GM12878 (cell line): ENCODE measurements at regions of chr6 and their contacts with region 1.

Region 1: GRCh38 chr6:81929828-81930227 is 177.3 kb upstream of the TENT5A start:
- DNase-seq: no peak
- ATAC-seq: no peak
- H3K4me3 ChIP-seq: no peak overlapping the region
- H3K27ac ChIP-seq: no peak overlapping the region
- H3K4me1 ChIP-seq: no peaks in the 10 kb centered on the region
- H3K27me3 ChIP-seq: no peaks in the 10 kb centered on the region
- CTCF ChIP-seq: no peak
- EP300 ChIP-seq: no peak
- POLR2A ChIP-seq: no peak
- RAD21 ChIP-seq: no peak

Region 2: GRCh38 chr6:81900616-81901015 is 29.2 kb before region 1 on chr6:
- CTCF ChIA-PET with region 1: interaction called, 3 read pairs
- POLR2A ChIA-PET with region 1: interaction called, 3 read pairs
- RAD21 ChIA-PET with region 1: interaction called, 6 read pairs
- SMC1A ChIA-PET with region 1: interaction called, 16 read pairs
- in situ Hi-C with region 1: no loop called
- intact Hi-C with region 1: no loop called
- DNase-seq: no peak
- ATAC-seq: peak; percentile 70
- H3K4me3 ChIP-seq: no peak overlapping the region
- H3K27ac ChIP-seq: no peak overlapping the region
- H3K4me1 ChIP-seq: no peaks in the 10 kb centered on the region
- H3K27me3 ChIP-seq: no peaks in the 10 kb centered on the region
- CTCF ChIP-seq: no peak
- EP300 ChIP-seq: no peak
- POLR2A ChIP-seq: no peak
- RAD21 ChIP-seq: no peak

Region 3: DNA sequence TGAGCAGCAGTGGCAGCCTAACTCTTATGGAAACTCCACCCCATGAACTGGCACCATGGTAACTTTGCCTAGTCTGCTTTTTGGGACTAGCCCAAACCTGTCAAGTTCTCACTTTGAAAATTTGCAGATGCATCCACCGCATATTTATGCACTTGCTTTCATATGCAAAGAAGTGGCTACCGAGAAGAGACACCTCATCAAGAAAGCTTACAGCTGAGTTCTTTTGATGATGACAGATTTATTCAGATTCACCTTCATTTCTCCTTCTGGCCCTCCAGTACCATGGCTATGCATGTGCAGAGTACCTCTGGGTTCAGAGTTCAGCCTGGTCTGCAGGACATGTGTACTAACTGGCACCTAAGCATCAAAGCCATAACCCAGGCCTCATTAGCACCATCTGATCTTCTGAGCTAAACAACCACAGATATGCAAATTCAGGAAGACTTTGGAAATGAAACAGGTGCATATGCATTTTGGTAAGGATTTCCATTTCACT is 23.1 kb before region 1 on chr6:
- CTCF ChIA-PET with region 1: interaction called, 6 read pairs
- POLR2A ChIA-PET with region 1: interaction called, 4 read pairs
- RAD21 ChIA-PET with region 1: interaction called, 10 read pairs
- SMC1A ChIA-PET with region 1: interaction called, 22 read pairs
- in situ Hi-C with region 1: no loop called
- intact Hi-C with region 1: no loop called
- DNase-seq: peak; percentile 44
- ATAC-seq: peak; percentile 54
- H3K4me3 ChIP-seq: no peak overlapping the region
- H3K27ac ChIP-seq: no peak overlapping the region
- H3K4me1 ChIP-seq: no peaks in the 10 kb centered on the region
- H3K27me3 ChIP-seq: no peaks in the 10 kb centered on the region
- CTCF ChIP-seq: no peak
- EP300 ChIP-seq: 0 out of 4 replicates have a peak, but pooled peaks of 1 of the 2 experiments have one; percentile 5
- POLR2A ChIP-seq: no peak
- RAD21 ChIP-seq: no peak

Region 4: GRCh38 chr6:81944661-81945060 is 14.8 kb after region 1 on chr6:
- CTCF ChIA-PET with region 1: interaction called, 5 read pairs
- POLR2A ChIA-PET with region 1: interaction called, 4 read pairs
- RAD21 ChIA-PET with region 1: interaction called, 4 read pairs
- SMC1A ChIA-PET with region 1: interaction called, 16 read pairs
- in situ Hi-C with region 1: no loop called
- intact Hi-C with region 1: no loop called
- DNase-seq: no peak
- ATAC-seq: no peak
- H3K4me3 ChIP-seq: no peak overlapping the region
- H3K27ac ChIP-seq: no peak overlapping the region
- H3K4me1 ChIP-seq: no peaks in the 10 kb centered on the region
- H3K27me3 ChIP-seq: no peaks in the 10 kb centered on the region
- CTCF ChIP-seq: no peak
- EP300 ChIP-seq: no peak
- POLR2A ChIP-seq: no peak
- RAD21 ChIP-seq: no peak

Region 5: GRCh38 chr6:82260997-82261686 is 331.3 kb after region 1 on chr6:
- CTCF ChIA-PET with region 1: no interaction called
- POLR2A ChIA-PET with region 1: no interaction called
- RAD21 ChIA-PET with region 1: no interaction called
- SMC1A ChIA-PET with region 1: no interaction called
- in situ Hi-C with region 1: no loop called
- intact Hi-C with region 1: no loop called
- DNase-seq: no peak
- ATAC-seq: no peak
- H3K4me3 ChIP-seq: no peak overlapping the region
- H3K27ac ChIP-seq: no peak overlapping the region
- H3K4me1 ChIP-seq: no peaks in the 10 kb centered on the region
- H3K27me3 ChIP-seq: no peaks in the 10 kb centered on the region
- CTCF ChIP-seq: no peak
- EP300 ChIP-seq: no peak
- POLR2A ChIP-seq: no peak
- RAD21 ChIP-seq: no peak